ENCODE measurements at regions of chr19 and their contacts with region 1.

Region 1: DNA sequence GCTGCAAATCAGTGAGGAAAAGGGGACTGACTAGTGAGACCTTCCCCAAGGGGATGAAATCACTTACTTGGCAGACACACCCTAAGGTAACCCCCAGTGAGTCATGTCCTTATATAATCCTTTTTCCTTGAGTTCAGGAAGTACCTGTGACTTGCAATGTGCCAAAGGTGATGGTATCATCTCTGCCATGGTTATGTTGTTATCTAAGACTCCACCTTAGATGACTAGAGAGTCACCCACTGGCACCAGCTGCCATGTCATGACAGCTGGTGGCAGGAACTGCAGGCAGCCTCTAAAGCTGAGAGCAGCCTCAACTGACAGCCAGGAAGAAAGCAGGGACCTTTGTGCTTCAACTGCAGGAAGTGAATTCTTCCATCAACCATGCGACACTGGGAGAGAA is 12.5 kb downstream of the PBX4 start:
- DNase-seq: no peak
- ATAC-seq: no peak

Region 2: DNA sequence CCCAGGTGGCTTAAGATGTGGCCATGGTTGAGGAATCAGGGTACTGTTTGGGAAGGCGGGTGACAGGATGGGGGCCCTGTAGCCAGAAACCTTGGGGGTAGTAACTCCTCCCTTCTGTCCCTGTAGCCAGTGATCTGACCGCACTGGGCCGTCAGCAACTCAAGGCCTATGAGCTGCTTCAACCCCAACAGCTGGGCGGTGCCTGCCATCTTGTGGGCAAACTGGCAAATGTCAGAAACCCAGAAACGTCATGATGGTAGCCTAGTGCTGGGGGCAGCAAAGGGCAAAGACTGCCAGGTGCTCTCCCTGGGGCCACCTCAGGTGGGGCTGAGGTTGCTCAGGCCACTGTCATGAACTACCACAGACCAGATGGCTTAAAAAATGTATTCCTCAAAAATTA is 690.4 kb before region 1 on chr19:
- intact Hi-C with region 1: no loop called
- DNase-seq: no peak
- ATAC-seq: no peak

Region 3: GRCh38 chr19:19304186-19304965 is 301.6 kb before region 1 on chr19:
- intact Hi-C with region 1: loop called (anchors 5 kb)
- DNase-seq: no peak
- ATAC-seq: no peak

Region 4: GRCh38 chr19:19668230-19669012 is 62.4 kb after region 1 on chr19 and contains the start of gene ZNF101:
- intact Hi-C with region 1: no loop called
- DNase-seq: peak; percentile 96
- ATAC-seq: peak; percentile 86
- total RNA-seq, gene ZNF101: 9.3 TPM